ENCODE measurements at regions of chr17 and their contacts with region 1.

Region 1: DNA sequence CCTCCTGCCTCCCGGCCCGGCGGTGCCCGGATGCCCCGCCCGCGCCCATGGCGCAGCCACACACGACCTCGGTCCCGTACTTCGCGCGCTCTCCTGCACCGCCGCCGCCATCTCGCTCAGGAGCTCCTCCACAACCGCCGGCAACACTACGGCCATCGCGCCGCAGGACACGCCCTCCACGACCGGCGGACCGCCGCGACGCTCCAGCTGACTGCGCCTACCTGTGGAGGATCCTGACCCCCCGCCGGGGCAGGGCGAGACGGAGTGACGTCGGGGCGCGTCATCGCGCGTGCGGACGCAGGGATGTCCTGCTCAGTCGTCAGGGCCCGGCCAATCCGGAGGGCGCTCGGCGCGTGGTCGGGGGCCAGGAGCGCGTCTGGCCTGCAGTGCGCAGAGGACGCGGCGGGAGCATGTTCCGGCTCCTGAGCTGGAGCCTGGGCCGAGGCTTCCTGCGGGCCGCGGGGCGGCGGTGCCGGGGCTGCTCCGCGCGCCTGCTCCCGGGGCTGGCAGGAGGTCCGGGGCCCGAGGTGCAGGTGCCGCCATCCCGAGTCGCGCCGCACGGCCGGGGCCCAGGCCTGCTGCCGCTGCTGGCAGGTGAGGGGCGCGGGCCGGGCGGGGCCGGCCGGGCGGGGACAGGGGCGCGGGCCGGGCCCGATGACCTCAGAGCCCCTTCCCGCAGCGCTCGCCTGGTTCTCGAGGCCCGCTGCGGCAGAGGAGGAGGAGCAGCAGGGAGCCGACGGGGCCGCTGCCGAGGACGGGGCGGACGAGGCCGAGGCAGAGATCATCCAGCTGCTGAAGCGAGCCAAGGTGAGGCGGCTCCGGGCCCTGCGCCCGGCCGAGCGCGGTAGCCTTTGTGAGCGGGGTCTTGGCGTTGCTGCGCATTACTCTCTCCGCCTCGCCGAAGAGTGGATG is at the starts of genes TTC19 and ZSWIM7:
- DNase-seq: peak; percentile 97
- ATAC-seq: peak; percentile 93
- H3K4me3 Mint-ChIP-seq: peak within 1 kb of the TSS; percentile 84
- H3K27ac Mint-ChIP-seq: peak within 1 kb of the TSS; percentile 98
- H3K4me1 Mint-ChIP-seq: peaks cover 25% of the 10 kb centered on the region
- H3K27me3 Mint-ChIP-seq: no peaks in the 10 kb centered on the region
- total RNA-seq, gene TTC19: 32.6 to 33.1 TPM
- total RNA-seq, gene ZSWIM7: 8.8 to 10.3 TPM

Region 2: GRCh38 chr17:15944759-15945529 is 54.8 kb before region 1 on chr17 and contains the start of gene ADORA2B:
- CTCF ChIA-PET with region 1: interaction called, 14 read pairs
- DNase-seq: peak; percentile 64
- ATAC-seq: peak; percentile 82
- H3K4me3 Mint-ChIP-seq: peak within 1 kb of the TSS; percentile 69
- H3K27ac Mint-ChIP-seq: peak within 1 kb of the TSS; percentile 6
- H3K4me1 Mint-ChIP-seq: peaks cover 12% of the 10 kb centered on the region
- H3K27me3 Mint-ChIP-seq: peaks cover 60% of the 10 kb centered on the region
- total RNA-seq, gene ADORA2B: 0.49 to 1.1 TPM

Region 3: GRCh38 chr17:15957206-15957605 is 42.5 kb before region 1 on chr17:
- CTCF ChIA-PET with region 1: interaction called, 13 read pairs
- DNase-seq: peak; percentile 75
- ATAC-seq: peak; percentile 57
- H3K4me3 Mint-ChIP-seq: no peak overlapping the region
- H3K27ac Mint-ChIP-seq: no peak overlapping the region
- H3K4me1 Mint-ChIP-seq: peaks cover 33% of the 10 kb centered on the region
- H3K27me3 Mint-ChIP-seq: peaks cover 77% of the 10 kb centered on the region

Region 4: GRCh38 chr17:16040710-16041251 is 41.1 kb after region 1 on chr17:
- CTCF ChIA-PET with region 1: no interaction called
- DNase-seq: no peak
- ATAC-seq: no peak
- H3K4me3 Mint-ChIP-seq: no peak overlapping the region
- H3K27ac Mint-ChIP-seq: no peak overlapping the region
- H3K4me1 Mint-ChIP-seq: peaks cover 2% of the 10 kb centered on the region
- H3K27me3 Mint-ChIP-seq: no peaks in the 10 kb centered on the region

Region 5: GRCh38 chr17:16068323-16068722 is 68.6 kb after region 1 on chr17:
- CTCF ChIA-PET with region 1: no interaction called
- DNase-seq: no peak
- ATAC-seq: no peak
- H3K4me3 Mint-ChIP-seq: no peak overlapping the region
- H3K27ac Mint-ChIP-seq: no peak overlapping the region
- H3K4me1 Mint-ChIP-seq: no peaks in the 10 kb centered on the region
- H3K27me3 Mint-ChIP-seq: no peaks in the 10 kb centered on the region

Measured in activated CD8-positive, alpha-beta memory T cell treated with anti-CD3 and anti-CD28 coated beads, Interleukin-2, amount 10 ng/mL, durations not matched to agents 7 days and 5 days (primary cell).